Mammary epithelial cell (primary cell): ENCODE measurements at regions of chr1 and their contacts with region 1.

Region 1: DNA sequence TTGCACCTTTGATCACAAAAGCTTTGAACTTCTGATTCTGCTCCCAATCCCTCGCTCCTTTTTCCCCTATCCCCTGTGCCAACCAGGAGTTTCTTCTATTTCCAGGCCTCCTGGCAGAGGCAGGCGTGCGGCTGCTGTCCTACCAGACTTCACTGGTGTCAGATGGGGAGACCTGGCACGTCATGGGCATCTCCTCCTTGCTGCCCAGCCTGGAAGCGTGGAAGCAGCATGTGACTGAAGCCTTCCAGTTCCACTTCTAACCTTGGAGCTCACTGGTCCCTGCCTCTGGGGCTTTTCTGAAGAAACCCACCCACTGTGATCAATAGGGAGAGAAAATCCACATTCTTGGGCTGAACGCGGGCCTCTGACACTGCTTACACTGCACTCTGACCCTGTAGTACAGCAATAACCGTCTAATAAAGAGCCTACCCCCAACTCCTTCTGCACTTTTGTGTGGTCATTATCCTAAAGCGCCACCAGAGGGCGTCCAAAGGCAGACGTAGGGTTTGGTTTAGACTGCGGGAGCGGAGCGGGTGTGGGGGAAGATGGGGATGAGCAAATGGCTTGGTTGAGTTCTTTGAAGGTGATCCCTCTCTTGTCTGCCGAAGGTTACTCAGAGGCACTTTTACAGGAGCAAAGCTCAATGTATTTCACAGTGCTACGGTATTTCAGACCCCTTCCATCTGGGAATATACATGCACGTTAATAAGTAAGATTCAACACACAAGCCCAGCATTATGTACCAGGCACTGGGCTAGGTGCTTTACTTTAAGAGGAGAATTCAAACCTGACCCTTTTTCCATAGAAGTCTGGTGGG is 24.7 kb downstream of the HMGCS2 start:
- DNase-seq: peak; percentile 67
- H3K4me3 ChIP-seq: no peak overlapping the region
- H3K27ac ChIP-seq: no peak overlapping the region
- H3K4me1 ChIP-seq: peaks cover 25% of the 10 kb centered on the region
- H3K27me3 ChIP-seq: no peaks in the 10 kb centered on the region
- CTCF ChIP-seq: peak; percentile 77 to 84

Region 2: DNA sequence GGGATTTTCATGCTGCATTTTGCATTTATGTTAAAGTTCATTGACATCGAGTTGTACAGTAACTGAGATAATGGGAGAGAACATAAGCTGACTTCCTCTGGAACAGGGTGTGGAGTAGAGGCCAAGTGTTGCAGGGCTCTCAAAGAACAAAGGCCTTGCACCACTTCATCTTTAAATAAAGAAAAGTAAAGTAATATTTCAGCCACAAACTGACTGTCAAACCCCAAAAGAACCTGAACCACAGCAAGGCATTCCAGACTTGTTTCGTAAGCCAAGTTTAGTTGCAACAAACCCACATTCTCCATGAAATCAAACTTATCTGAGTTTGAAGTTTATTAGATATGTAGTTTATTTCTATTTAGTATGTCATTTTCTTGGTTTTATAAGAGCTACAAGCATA is 43.8 kb after region 1 on chr1:
- CTCF ChIA-PET with region 1: no interaction called
- dilution Hi-C with region 1: no loop called
- in situ Hi-C with region 1: no loop called
- intact Hi-C with region 1: loop called (anchors 2 kb)
- DNase-seq: peak; percentile 76
- H3K4me3 ChIP-seq: no peak overlapping the region
- H3K27ac ChIP-seq: peak overlapping the region; percentile 46
- H3K4me1 ChIP-seq: peaks cover 57% of the 10 kb centered on the region
- H3K27me3 ChIP-seq: no peaks in the 10 kb centered on the region
- CTCF ChIP-seq: no peak

Region 3: GRCh38 chr1:119808972-119809550 is 65.1 kb after region 1 on chr1:
- CTCF ChIA-PET with region 1: interaction called, 5 read pairs
- dilution Hi-C with region 1: no loop called
- in situ Hi-C with region 1: loop called in 1 of 2 experiments (anchors 10 kb)
- intact Hi-C with region 1: loop called (anchors 1 kb)
- DNase-seq: peak; percentile 54
- H3K4me3 ChIP-seq: no peak overlapping the region
- H3K27ac ChIP-seq: no peak overlapping the region
- H3K4me1 ChIP-seq: peaks cover 5% of the 10 kb centered on the region
- H3K27me3 ChIP-seq: no peaks in the 10 kb centered on the region
- CTCF ChIP-seq: peak; percentile 94

Region 4: DNA sequence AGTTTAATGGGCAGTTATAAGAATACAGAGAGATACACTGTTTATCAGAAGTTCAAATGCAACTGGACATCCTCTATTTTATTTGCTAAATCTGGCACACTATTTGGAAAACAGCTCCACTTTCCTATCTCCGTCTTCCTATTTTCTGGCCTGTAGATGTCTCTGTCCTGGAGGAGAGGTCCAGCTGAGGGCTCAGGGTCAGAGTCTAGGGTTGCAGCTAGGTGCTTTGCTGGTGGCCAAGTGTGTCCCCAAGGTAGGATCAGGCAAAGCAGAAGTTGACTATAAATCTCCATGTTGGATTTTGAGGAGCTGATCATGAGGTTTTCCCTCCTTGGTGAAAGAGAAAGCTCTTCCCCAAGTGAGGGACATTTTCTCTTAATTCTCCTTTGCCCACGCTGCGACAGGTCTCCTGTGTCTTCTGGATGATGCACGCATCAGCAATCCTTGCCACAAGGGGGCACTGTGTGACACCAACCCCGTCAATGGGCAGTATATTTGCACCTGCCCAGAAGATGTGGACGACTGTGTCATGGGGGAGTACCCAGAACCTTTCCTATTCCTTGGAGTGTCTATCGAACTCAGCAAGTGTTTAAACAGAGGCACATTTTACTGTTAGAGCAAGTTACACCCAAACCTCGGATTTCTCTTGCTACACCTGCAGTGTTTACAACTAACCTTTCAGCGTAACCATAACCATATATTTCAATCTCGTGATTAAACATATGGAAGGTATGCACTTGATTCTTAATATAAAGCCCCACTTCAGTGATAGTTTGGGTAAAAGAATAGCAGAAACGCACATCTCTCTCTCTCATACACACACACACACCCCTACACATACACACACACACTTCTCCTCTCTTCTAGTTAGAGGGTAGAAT is 142.2 kb after region 1 on chr1:
- CTCF ChIA-PET with region 1: no interaction called
- dilution Hi-C with region 1: no loop called
- in situ Hi-C with region 1: no loop called
- intact Hi-C with region 1: loop called (anchors 5 kb)
- DNase-seq: no peak
- H3K4me3 ChIP-seq: no peak overlapping the region
- H3K27ac ChIP-seq: no peak overlapping the region
- H3K4me1 ChIP-seq: no peaks in the 10 kb centered on the region
- H3K27me3 ChIP-seq: no peaks in the 10 kb centered on the region
- CTCF ChIP-seq: peak; percentile 85 to 89

Region 5: DNA sequence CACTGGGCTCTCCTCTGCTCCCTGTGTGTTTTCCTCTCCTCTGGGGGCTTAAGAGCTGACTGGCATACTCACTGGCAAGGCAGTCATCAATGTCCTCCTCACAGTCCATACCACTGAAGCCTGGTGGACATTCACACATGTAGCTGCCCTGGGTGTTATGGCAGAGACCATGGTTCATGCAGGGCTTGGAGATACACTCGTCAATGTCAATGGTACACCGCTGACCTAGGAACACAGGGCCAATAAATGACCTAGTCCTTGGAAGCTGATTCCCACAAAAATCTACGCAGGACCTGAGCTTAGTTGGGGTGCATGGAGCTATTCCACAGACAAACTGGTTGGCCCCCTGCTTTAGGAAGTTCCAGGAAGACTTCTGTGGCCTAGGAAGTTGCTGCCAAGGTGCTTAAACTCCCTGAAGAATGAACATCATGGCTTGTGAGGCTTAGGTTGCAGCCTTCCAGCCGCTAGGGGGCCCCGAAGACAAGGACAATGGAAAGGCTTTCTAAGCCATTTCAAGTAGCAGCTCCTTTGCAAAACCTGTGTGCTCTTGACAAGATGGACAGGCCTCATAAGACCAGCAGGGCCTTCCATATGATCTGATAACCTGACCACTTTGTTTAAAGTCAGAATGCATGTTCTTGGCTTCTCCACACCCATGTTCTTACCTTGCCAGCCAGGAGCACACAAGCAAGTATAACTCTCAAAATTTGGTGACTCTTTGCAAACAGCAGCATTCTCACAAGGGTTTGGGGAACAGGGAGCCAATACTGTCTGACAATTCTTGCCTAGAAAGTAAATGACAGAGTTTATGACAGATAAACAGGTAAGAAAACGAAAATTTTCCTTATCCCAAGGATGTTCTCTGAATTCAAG is 204.6 kb after region 1 on chr1:
- CTCF ChIA-PET with region 1: no interaction called
- dilution Hi-C with region 1: no loop called
- in situ Hi-C with region 1: no loop called
- intact Hi-C with region 1: loop called (anchors 2 kb)
- DNase-seq: peak; percentile 64
- H3K4me3 ChIP-seq: no peak overlapping the region
- H3K27ac ChIP-seq: no peak overlapping the region
- H3K4me1 ChIP-seq: peaks cover 8% of the 10 kb centered on the region
- H3K27me3 ChIP-seq: no peaks in the 10 kb centered on the region
- CTCF ChIP-seq: peak; percentile 90 to 93